ENCODE measurements at regions of chr5 and their contacts with region 1.

Region 1: GRCh38 chr5:81851481-81852178 is 100.7 kb upstream of the SSBP2 start:
- DNase-seq: peak; percentile 95
- ATAC-seq: peak; percentile 88
- H3K4me3 Mint-ChIP-seq: peak overlapping the region; percentile 95
- H3K27ac Mint-ChIP-seq: peak overlapping the region; percentile 98
- H3K4me1 Mint-ChIP-seq: peaks cover 39% of the 10 kb centered on the region
- H3K27me3 Mint-ChIP-seq: no peaks in the 10 kb centered on the region

Region 2: GRCh38 chr5:81675846-81676245 is 175.8 kb before region 1 on chr5:
- POLR2A ChIA-PET with region 1: no interaction called
- DNase-seq: no peak
- ATAC-seq: no peak
- H3K4me3 Mint-ChIP-seq: no peak overlapping the region
- H3K27ac Mint-ChIP-seq: no peak overlapping the region
- H3K4me1 Mint-ChIP-seq: no peaks in the 10 kb centered on the region
- H3K27me3 Mint-ChIP-seq: no peaks in the 10 kb centered on the region

Region 3: DNA sequence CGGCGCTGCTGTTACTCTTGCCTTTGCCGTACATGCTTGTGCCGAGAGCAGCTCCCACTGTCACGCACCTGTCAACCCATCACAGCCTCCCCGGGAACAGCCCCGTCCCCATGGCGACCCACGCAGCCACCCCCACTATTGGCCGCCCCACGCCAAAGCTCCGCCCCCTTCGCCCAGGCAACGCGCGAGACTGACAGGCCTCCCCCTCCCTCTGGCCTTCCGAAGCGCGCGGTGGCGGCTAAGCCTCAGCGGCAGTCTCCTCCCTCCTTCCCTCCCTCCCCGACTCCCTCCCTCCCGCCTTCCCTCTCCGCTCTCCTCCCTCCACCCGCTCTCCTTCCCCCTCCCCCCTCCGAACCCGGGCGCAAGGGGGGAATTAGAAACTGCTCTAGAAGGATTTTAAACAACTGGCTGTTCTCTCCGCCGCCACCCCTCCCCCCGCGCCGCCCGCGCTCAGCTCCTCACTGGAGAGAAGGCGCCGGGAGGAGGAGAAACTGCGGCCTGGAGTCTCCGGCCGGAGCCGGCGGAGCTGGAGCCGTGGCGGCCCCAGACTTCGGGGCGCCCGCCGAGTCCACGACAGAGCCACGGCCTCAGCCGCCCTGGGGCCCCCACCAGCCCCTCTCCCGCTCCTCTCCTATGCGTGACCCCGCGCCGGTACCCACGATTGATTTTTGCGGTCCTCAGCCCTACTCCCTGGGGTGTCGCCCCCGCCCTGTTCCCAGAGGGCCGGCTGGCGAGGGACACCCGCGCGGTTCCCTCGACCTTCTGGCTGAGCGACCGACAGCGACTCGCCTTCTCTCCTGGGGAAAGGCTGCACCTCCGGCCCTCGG is 100.4 kb before region 1 on chr5 and contains the start of gene SSBP2:
- POLR2A ChIA-PET with region 1: interaction called, 215 read pairs
- DNase-seq: peak; percentile 99
- ATAC-seq: peak; percentile 86
- H3K4me3 Mint-ChIP-seq: peak within 1 kb of the TSS; percentile 92
- H3K27ac Mint-ChIP-seq: peak within 1 kb of the TSS; percentile 91
- H3K4me1 Mint-ChIP-seq: peaks cover 20% of the 10 kb centered on the region
- H3K27me3 Mint-ChIP-seq: peaks cover 30% of the 10 kb centered on the region
- total RNA-seq, gene SSBP2: 32.5 to 35.4 TPM

Region 4: DNA sequence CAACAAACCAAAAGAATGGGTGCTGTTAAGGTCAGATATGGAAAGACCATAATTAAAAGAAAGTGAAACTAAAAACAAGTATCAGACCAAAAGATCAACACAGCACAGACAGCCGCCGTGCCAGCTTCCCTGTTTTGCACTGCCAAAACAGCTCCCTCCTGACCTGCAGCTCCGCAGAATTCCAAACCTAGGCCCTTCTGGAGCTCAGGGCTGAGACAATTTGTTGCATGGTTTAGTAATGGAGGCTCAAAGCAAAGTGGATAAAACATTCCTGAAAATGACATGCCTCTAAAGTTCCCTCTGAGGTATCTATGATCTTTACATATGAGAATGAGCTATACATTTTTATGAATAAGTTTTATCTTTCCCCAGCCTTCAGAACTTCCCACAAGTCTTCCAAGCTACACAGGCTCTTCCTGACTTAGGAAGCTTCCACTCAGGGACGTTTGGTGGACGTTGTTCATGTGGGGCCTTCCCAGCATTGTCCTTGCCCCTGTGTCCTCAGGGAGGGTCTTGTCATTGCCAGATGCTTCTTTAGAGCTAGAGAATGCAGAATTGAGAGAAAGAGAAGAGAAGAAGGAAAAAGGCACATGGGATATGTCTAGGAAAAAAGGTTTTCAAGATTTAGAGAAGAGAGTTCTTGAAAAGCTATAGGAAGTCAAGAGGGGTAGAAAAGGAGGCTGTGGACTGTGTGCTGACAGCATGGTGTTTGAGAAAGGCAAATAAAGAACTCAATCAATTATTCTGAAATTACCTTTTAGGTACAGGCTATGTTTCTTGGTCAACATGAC is 72.3 kb before region 1 on chr5:
- POLR2A ChIA-PET with region 1: interaction called, 28 read pairs
- DNase-seq: peak; percentile 51
- ATAC-seq: peak; percentile 84
- H3K4me3 Mint-ChIP-seq: peak overlapping the region; percentile 77
- H3K27ac Mint-ChIP-seq: peak overlapping the region; percentile 86
- H3K4me1 Mint-ChIP-seq: peaks cover 20% of the 10 kb centered on the region
- H3K27me3 Mint-ChIP-seq: no peaks in the 10 kb centered on the region

Region 5: DNA sequence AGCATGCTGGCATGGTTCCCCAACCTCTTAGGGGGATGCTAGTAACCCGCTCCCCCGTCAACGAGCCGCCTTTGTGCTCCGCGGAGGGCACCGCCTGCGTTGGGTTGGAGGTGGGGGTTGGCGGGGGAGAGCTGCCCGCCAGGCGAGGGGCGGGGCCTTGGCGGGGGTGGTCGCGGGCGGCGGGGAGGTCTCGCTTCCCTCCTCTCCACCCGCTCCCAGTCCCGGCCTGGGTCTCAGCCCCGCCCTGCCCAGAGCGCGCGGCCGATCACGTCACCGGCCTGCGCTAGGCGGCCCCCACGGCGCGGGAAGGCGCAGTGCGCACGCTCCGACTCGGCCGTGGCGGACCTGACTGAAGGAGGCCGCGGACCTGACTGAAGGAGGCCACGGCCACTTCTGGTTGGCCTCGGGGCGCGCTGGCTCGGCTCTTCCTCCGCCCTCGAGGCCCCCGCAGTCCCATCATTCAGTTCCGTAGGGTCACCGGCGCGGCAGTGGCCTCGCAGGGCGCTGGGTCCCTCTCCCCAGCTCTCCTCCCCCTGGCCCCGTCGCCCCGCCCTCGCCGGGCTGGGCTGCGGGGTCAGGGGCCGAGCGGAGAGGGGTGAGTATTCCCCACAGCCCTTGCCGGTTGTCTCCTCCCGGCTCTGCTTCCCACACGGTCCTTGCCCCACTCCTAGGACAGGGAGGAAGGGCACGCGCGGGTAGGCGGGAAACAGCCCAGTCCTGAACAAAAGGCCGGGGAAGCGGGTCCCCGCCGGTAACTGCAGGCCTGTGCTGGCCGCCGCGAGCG is 120.3 kb after region 1 on chr5 and contains the start of gene ATG10:
- POLR2A ChIA-PET with region 1: interaction called, 27 read pairs
- DNase-seq: peak; percentile 94
- ATAC-seq: peak; percentile 96
- H3K4me3 Mint-ChIP-seq: peak within 1 kb of the TSS; percentile 88
- H3K27ac Mint-ChIP-seq: peak within 1 kb of the TSS; percentile 95
- H3K4me1 Mint-ChIP-seq: peaks cover 27% of the 10 kb centered on the region
- H3K27me3 Mint-ChIP-seq: no peaks in the 10 kb centered on the region
- total RNA-seq, gene ATG10: 11.5 to 12.4 TPM

Region 6: DNA sequence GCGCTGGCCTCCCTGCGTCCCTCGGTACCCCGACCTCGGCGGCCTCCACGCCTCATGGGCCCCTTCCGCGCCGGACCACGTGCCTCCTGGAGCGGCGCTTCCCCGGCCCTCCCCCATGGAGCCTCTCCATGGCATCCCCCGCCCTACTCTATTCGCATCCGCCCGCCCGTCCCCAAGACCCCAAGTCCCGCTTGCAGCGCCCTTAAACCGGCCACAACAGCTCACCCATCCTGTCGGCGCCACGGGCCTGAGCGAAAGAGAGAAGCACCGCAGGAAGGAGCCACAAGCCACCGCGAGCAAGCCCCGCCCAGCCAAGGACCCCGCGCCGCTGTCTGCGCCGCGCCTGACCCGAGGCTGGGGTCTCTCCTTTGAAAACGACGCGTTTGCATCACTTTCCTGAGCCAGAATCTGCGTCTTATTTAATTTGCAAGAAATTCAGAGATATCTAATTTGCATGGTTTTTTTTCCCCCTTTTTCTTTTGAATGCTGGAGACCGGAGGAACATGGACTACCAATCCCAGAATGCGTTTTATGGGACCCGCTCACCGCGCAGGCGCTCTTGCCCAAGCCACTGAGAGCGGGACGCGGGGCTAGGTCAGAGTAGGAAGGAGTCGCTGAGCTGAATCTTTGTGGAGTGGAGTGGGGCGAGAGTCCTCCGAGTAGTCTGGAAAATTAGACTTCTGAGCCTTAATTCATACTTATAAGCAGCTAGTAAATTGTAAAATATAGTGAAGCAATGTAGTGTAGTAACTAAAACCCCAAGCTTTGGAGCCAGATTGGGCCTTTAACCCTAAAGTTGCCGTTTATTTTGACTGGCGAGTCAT is 426.7 kb after region 1 on chr5 and contains the start of gene RPS23:
- POLR2A ChIA-PET with region 1: interaction called, 13 read pairs
- DNase-seq: peak; percentile 88
- ATAC-seq: peak; percentile 93
- H3K4me3 Mint-ChIP-seq: peak within 1 kb of the TSS; percentile 88
- H3K27ac Mint-ChIP-seq: peak within 1 kb of the TSS; percentile 96
- H3K4me1 Mint-ChIP-seq: peaks cover 31% of the 10 kb centered on the region
- H3K27me3 Mint-ChIP-seq: no peaks in the 10 kb centered on the region
- total RNA-seq, gene RPS23: 1,979 to 2,058 TPM

Measured in activated naive CD8-positive, alpha-beta T cell treated with anti-CD3 and anti-CD28 coated beads, Interleukin-2, amount 10 ng/mL, durations not matched to agents 7 days and 5 days (primary cell).